ENCODE measurements at regions of chr12 and their contacts with region 1.

Region 1: GRCh38 chr12:108514973-108515814 is at the start of gene FICD:
- DNase-seq: peak; percentile 100
- ATAC-seq: peak; percentile 93
- H3K4me3 Mint-ChIP-seq: peak within 1 kb of the TSS; percentile 82
- H3K27ac Mint-ChIP-seq: peak within 1 kb of the TSS; percentile 83
- H3K4me1 Mint-ChIP-seq: peaks cover 26% of the 10 kb centered on the region
- H3K27me3 Mint-ChIP-seq: no peaks in the 10 kb centered on the region
- total RNA-seq, gene FICD: 3.5 to 4.5 TPM

Region 2: GRCh38 chr12:107317751-107318613 is 1197.2 kb before region 1 on chr12:
- CTCF ChIA-PET with region 1: no interaction called
- POLR2A ChIA-PET with region 1: no interaction called
- intact Hi-C with region 1: loop called in 1 of 2 experiments (anchors 1 kb)
- DNase-seq: peak; percentile 93
- ATAC-seq: peak; percentile 66
- H3K4me3 Mint-ChIP-seq: peak overlapping the region; percentile 86
- H3K27ac Mint-ChIP-seq: no peak overlapping the region
- H3K4me1 Mint-ChIP-seq: peaks cover 27% of the 10 kb centered on the region
- H3K27me3 Mint-ChIP-seq: peaks cover 2% of the 10 kb centered on the region

Region 3: DNA sequence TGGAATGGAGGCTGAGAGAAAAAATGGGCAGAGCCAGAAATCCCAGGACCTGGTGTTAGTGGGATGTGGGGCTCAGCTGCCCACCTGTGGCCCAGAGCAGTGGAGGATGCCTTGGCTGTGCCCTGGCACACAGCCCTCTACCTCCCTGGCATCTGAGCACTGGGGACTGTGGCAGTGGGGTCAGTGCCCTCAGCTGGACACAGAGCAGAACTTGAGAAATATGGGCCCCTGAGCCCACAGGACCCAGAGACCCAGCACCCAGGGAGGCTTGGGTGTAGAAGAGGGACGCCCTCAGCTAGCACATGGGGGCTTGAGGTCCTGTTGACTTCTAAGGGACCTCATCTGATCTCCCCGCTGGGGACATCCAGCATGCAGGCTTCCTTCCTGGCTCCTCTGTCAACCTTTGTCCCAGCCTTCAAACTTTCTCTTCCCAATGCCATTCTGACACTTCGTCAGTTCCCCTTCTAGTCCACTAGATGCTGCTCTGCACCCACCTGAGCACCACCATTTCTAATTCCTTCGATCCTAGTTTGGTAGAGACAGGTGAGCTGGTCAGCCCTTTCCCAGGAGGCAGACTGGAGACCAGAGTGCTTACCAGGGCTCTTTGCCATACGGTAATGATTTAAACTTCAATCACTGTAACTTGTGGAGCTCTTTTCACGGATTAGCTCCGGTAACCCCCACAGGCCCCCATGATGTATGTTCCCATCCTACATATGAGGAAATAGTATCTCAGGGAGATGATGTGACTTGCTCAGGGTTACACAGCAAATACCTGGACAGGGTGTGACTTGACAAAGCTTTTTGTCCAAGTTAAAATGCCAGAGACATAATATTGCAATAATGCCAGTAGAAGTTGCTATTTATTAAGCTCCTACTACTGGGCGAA is 597.0 kb before region 1 on chr12:
- CTCF ChIA-PET with region 1: interaction called, 4 read pairs
- POLR2A ChIA-PET with region 1: no interaction called
- intact Hi-C with region 1: loop called in 1 of 2 experiments (anchors 1 kb)
- DNase-seq: peak; percentile 9
- ATAC-seq: peak; percentile 47
- H3K4me3 Mint-ChIP-seq: no peak overlapping the region
- H3K27ac Mint-ChIP-seq: no peak overlapping the region
- H3K4me1 Mint-ChIP-seq: no peaks in the 10 kb centered on the region
- H3K27me3 Mint-ChIP-seq: peaks cover 37% of the 10 kb centered on the region

Region 4: GRCh38 chr12:108099073-108099472 is 416.1 kb before region 1 on chr12:
- CTCF ChIA-PET with region 1: no interaction called
- POLR2A ChIA-PET with region 1: no interaction called
- intact Hi-C with region 1: loop called in 1 of 2 experiments (anchors 1 kb)
- DNase-seq: no peak
- ATAC-seq: no peak
- H3K4me3 Mint-ChIP-seq: no peak overlapping the region
- H3K27ac Mint-ChIP-seq: no peak overlapping the region
- H3K4me1 Mint-ChIP-seq: no peaks in the 10 kb centered on the region
- H3K27me3 Mint-ChIP-seq: peaks cover 13% of the 10 kb centered on the region

Region 5: DNA sequence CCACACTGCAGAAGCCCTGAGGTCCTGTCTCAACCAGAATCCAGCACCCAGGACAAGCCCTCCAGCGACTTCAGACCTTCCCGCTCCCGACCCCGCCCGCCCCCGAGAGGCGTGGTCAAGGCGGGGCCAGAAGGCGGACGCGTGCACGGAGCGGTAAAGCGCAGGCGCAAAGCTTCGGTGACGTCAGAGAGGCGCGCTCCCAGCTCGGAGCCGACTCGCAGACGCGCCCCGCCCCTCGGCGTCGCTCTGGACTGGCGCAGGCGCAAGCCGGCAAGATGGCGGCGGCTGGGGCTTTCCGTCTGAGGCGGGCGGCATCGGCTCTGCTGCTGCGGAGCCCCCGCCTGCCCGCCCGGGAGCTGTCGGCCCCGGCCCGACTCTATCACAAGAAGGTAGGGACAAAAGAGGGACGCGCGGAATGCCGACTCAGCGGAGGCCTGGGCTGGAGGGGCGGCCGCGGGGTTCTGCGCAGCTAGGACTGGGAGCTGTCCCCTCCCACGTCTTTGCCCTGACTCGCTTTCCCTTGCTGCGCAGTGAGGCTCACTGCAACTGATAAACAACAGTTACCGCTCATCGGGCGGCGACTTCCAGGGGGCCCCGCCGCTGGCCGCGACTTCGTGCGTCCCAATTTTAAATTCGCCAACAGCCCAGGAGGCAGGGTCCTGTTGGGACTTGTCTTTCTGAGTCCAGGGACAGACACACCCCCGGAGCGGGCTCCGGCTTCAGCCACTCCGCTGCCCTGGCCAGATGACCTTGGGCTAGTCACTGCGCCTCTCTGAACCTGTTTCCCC is 47.3 kb after region 1 on chr12 and contains the start of gene ISCU:
- CTCF ChIA-PET with region 1: interaction called, 3 read pairs
- POLR2A ChIA-PET with region 1: interaction called, 3 read pairs
- intact Hi-C with region 1: loop called (anchors 1 to 2 kb)
- DNase-seq: peak; percentile 99
- ATAC-seq: peak; percentile 57
- H3K4me3 Mint-ChIP-seq: peak within 1 kb of the TSS; percentile 100
- H3K27ac Mint-ChIP-seq: peak within 1 kb of the TSS; percentile 100
- H3K4me1 Mint-ChIP-seq: peaks cover 48% of the 10 kb centered on the region
- H3K27me3 Mint-ChIP-seq: no peaks in the 10 kb centered on the region
- total RNA-seq, gene ISCU: 67.3 to 83.8 TPM

Region 6: GRCh38 chr12:108731105-108731865 is 216.1 kb after region 1 on chr12 and contains the start of gene CORO1C:
- CTCF ChIA-PET with region 1: no interaction called
- POLR2A ChIA-PET with region 1: no interaction called
- intact Hi-C with region 1: loop called in 1 of 2 experiments (anchors 1 kb)
- DNase-seq: peak; percentile 98
- ATAC-seq: peak; percentile 78
- H3K4me3 Mint-ChIP-seq: peak within 1 kb of the TSS; percentile 88
- H3K27ac Mint-ChIP-seq: peak within 1 kb of the TSS; percentile 93
- H3K4me1 Mint-ChIP-seq: peaks cover 36% of the 10 kb centered on the region
- H3K27me3 Mint-ChIP-seq: no peaks in the 10 kb centered on the region
- total RNA-seq, gene CORO1C: 83.5 to 90.8 TPM

Region 7: DNA sequence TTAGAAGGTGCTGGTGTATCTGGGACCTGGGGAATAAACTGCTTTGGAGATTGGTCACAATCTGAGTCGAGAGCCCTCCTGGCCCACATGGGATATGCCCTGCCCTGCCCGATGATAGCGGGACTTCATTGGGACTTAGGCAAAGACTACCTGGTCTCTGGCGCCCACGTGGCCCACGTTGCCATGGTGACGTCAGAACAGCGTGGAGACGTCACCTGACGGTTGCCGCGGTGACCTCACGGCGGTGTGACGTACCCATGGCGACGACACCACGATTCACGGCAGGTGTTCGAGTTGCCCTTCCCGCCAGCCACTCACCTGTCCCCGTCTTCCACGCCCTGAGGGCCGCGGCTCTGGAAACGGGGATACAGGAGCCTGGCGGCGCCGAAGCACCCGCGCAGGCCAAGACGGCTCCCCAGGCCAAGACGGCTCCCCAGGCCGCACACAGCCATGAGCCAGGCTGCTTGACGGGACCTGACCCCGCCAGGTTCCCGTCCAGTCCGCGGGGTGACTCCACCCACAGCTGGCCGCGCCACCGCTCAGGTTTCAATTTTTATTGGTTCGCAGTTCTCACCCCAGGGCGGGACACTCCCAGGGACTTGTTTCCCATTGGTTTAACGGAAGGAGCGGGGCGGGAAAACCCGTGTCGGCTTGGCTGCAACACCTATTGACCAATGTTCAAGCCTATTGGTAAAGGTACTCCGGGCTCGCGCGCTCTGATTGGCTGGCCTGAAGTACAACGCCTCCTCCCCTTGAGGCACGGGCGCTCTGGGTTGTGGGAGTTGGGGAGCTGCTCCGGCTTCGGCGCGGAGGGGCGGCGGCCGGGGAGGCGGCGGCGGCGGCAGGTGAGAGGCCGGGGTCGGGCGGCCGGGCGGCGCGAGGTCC is 1058.1 kb after region 1 on chr12 and contains the starts of genes MMAB and MVK:
- CTCF ChIA-PET with region 1: no interaction called
- POLR2A ChIA-PET with region 1: no interaction called
- intact Hi-C with region 1: loop called in 1 of 2 experiments (anchors 10 kb)
- DNase-seq: peak; percentile 99
- ATAC-seq: peak; percentile 97
- H3K4me3 Mint-ChIP-seq: peak within 1 kb of the TSS; percentile 90
- H3K27ac Mint-ChIP-seq: peak within 1 kb of the TSS; percentile 96
- H3K4me1 Mint-ChIP-seq: peaks cover 23% of the 10 kb centered on the region
- H3K27me3 Mint-ChIP-seq: no peaks in the 10 kb centered on the region
- total RNA-seq, gene MMAB: 37.7 to 44.3 TPM
- total RNA-seq, gene MVK: 17.8 to 18.7 TPM